ENCODE measurements at regions of chr12 and their contacts with region 1.

Region 1: DNA sequence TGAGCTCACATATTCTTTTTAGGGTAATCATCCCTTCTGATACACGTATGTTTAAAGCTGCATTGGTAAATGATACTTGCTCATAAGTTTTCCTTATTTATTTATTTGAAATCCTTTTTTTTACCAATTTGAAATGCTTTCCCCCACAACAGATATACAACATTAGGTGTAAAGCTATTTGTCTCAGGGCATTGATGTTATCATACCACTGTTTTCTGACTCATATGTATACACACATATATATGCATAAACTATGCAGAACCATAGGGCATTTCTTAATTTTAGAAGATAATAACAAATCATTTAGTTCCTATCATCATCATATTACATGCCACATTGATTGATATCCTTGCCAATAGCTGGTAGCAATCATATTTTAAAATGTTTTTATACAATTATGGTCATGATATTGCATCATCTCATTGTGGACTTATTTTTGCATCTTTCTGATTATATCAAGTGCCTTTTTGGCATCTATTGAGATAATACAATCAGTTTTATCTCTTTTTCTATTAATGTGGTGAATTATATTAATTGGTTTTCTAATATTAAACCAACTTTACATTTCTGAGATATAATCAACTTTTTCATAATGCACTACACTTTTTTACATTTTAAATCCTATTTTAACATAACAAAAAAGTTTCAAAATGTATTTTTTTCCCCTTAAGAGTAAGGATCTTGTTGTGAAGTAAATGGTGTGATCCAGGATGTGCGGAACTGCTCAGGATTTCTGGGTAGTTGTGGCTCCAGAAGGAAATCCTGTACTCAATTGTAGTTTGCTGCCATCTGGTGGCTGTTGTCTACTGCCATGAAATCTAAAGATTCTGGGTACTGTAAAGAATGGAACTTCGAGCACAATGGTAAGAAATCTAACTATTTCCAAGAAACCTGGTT is 16.7 kb downstream of the OR9K2 start:
- DNase-seq: no peak
- ATAC-seq: no peak
- H3K4me3 ChIP-seq: no peak overlapping the region
- H3K27ac ChIP-seq: no peak overlapping the region
- H3K4me1 ChIP-seq: no peaks in the 10 kb centered on the region
- H3K27me3 ChIP-seq: no peaks in the 10 kb centered on the region
- CTCF ChIP-seq: peak; percentile 54

Region 2: GRCh38 chr12:54993161-54993835 is 149.6 kb before region 1 on chr12:
- intact Hi-C with region 1: loop called in 1 of 2 experiments (anchors 5 kb)
- DNase-seq: no peak
- ATAC-seq: peak; percentile 68 to 82 (median 72)
- H3K4me3 ChIP-seq: no peak overlapping the region
- H3K27ac ChIP-seq: no peak overlapping the region
- H3K4me1 ChIP-seq: no peaks in the 10 kb centered on the region
- H3K27me3 ChIP-seq: no peaks in the 10 kb centered on the region
- CTCF ChIP-seq: peak; percentile 91